ENCODE measurements at regions of chr17 and their contacts with region 1.

Region 1: GRCh38 chr17:65294179-65294720 is 157.1 kb downstream of the RGS9 start:
- ATAC-seq: peak; percentile 85 to 100 (median 94)
- H3K4me3 ChIP-seq: no peak overlapping the region
- H3K27ac ChIP-seq: no peak overlapping the region
- H3K4me1 ChIP-seq: no peaks in the 10 kb centered on the region

Region 2: GRCh38 chr17:65181237-65182061 is 112.8 kb before region 1 on chr17:
- in situ Hi-C with region 1: no loop called
- ATAC-seq: no peak
- H3K4me3 ChIP-seq: no peak overlapping the region
- H3K27ac ChIP-seq: no peak overlapping the region
- H3K4me1 ChIP-seq: peaks cover 32 to 43% of the 10 kb centered on the region in 2 donors

Region 3: DNA sequence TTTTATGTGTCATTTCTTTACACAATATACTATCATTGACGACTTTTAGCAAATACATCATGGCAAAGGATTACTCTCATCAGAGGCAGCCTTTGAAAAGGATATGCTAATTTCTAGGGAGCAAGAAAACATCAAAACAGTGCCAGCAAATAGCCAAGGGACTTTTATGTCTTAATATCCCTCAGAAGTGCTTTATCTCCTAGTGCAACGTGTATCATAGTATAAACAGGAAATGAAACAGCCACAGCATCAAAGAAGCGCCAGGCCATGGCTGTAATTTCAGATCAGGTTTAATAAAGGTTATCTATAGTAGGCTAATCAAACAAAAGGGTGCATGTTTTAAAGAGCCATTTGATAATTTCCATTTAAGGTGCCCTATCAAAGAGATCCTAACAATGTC is 107.3 kb after region 1 on chr17:
- in situ Hi-C with region 1: no loop called
- ATAC-seq: no peak
- H3K4me3 ChIP-seq: no peak overlapping the region
- H3K27ac ChIP-seq: no peak overlapping the region
- H3K4me1 ChIP-seq: peaks cover 14 to 23% of the 10 kb centered on the region in 2 donors

Region 4: GRCh38 chr17:65547253-65547670 is 253.0 kb after region 1 on chr17:
- in situ Hi-C with region 1: loop called in 4 of 9 experiments (anchors 5 to 25 kb)
- ATAC-seq: peak in 2 of 8 experiments; percentile 53 to 65
- H3K4me3 ChIP-seq: no peak overlapping the region
- H3K27ac ChIP-seq: no peak overlapping the region
- H3K4me1 ChIP-seq: peaks cover 16 to 23% of the 10 kb centered on the region in 2 donors

Region 5: GRCh38 chr17:65988081-65988850 is 694.0 kb after region 1 on chr17:
- in situ Hi-C with region 1: loop called in 3 of 9 experiments (anchors 25 kb)
- ATAC-seq: peak in 3 of 8 experiments; percentile 57 to 70 (median 64)
- H3K4me3 ChIP-seq: no peak overlapping the region
- H3K27ac ChIP-seq: no peak overlapping the region
- H3K4me1 ChIP-seq: no peaks in the 10 kb centered on the region

Region 6: DNA sequence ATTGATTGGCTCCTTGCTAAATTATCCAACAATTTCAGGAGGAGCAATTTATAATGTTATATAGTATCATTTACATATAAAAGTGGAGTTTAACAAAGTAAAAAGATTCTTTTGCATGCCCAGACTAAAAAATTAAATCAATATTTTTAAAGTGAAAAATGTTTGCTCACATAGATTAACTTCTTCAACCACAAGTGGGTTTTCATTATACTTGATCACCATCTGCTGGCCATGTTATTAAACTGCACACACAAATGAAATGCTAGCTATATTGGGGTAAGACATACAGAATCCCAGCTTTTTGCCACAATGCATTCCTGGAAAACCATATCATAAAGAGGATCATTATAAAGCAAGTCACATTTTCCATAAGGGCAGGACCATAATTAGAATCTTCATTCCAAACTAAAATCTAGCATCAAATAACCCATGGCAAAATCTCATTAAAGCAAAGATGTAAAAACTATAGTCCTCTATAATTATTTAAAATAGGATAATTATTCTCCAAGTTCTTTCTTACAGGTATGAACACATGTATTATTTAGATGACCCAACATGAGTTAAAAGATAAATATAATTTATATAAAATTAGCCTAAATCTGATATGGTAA is 871.4 kb after region 1 on chr17:
- in situ Hi-C with region 1: loop called in 7 of 9 experiments (anchors 25 kb)
- ATAC-seq: peak in 3 of 8 experiments; percentile 32 to 44 (median 38)
- H3K4me3 ChIP-seq: no peak overlapping the region
- H3K27ac ChIP-seq: no peak overlapping the region
- H3K4me1 ChIP-seq: no peaks in the 10 kb centered on the region